ENCODE measurements at regions of chr2 and their contacts with region 1.

Region 1: DNA sequence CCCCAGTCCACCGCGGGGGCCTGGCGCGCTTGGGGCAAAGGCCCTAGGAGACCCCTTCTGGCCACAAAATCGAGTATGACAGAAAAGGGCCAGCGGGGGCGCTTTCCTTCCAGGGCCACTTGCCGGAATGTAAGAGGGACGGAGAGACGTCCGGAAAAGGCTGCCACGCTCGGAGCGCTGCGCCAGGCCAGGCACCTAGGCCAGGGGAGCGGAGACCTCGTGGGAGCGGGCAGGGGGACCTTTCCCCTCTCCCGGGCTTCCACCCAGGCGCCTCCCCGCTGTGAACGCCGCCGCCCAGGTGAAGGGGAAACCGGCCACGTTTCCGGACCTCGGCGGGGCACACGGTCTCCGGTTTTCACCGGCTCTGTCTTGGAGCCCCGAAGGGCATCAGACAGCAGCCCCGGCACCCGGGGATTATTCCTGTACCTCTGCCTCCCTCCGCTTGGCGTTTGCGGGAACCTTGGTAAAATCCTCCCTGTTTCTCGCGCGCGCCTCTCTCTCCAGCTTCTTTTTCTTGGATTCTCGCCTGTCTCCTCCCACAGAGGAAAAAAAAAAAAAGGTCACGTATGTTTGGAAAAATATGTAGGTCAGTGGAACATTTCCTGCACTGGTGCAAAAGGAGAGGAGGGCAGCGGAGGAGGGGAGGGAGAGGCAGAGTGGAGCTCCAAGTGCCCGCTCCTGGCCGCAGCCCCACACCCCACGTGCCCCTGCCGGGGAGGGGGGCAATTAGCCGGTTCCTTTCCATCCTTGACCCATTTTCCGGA is 1.2 kb upstream of the NPAS2 start:
- DNase-seq: peak; percentile 55 to 76
- H3K4me3 ChIP-seq: peak overlapping the region; percentile 73
- H3K27ac ChIP-seq: peak overlapping the region; percentile 83
- H3K4me1 ChIP-seq: peaks cover 33% of the 10 kb centered on the region
- H3K27me3 ChIP-seq: no peaks in the 10 kb centered on the region
- CTCF ChIP-seq: peak; percentile 50; the same call in 1 of the 2 replicates

Region 2: DNA sequence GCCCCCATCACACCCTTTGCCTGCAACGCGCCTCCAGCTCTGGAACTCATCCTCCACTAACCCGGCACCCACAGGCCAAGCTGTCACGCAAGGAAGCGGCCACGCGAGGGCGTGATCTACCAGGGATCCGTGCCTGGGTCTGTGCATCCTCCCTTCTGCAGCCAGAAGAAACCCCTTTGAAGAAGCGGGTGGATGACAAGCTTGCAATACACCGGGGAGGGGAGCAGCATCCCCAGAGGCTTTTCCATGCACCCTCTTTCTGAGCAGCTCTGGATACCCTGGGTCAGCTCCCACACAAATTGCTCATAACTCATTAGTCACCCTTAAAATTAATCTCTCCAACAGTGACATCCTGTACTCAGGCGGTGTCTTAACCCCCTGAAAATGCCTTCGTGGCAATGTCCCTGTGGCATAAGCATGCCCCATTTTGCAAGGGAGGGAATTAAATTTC is 208.4 kb before region 1 on chr2:
- CTCF ChIA-PET with region 1: no interaction called
- POLR2A ChIA-PET with region 1: no interaction called
- intact Hi-C with region 1: loop called (anchors 1 kb)
- DNase-seq: peak; percentile 35 to 80
- H3K4me3 ChIP-seq: no peak overlapping the region
- H3K27ac ChIP-seq: no peak overlapping the region
- H3K4me1 ChIP-seq: no peaks in the 10 kb centered on the region
- H3K27me3 ChIP-seq: no peaks in the 10 kb centered on the region
- CTCF ChIP-seq: peak; percentile 79

Region 3: DNA sequence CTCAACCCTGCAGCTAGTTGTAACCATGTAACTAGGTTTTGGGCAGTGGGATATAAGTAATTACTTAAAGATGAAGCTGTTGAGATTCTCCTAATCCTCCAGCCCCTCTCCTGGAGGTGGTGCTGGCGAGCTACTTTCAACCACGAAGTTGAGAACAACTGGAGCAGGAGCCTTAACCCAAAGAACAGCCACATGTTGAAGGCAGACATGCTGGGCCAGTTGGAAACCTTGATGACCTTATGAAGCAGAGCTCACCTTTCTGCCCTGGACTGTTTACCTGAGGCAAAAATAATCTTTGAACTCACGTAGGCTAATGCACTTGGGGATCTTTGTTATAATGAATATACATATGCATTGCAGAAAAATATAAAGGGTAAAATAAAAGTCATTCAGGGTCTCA is 88.4 kb before region 1 on chr2:
- CTCF ChIA-PET with region 1: no interaction called
- POLR2A ChIA-PET with region 1: no interaction called
- intact Hi-C with region 1: loop called (anchors 2 kb)
- DNase-seq: peak; percentile 61 to 72
- H3K4me3 ChIP-seq: no peak overlapping the region
- H3K27ac ChIP-seq: no peak overlapping the region
- H3K4me1 ChIP-seq: peaks cover 29% of the 10 kb centered on the region
- H3K27me3 ChIP-seq: no peaks in the 10 kb centered on the region
- CTCF ChIP-seq: peak; percentile 86

Region 4: GRCh38 chr2:100845141-100845991 is 26.6 kb after region 1 on chr2:
- CTCF ChIA-PET with region 1: no interaction called
- POLR2A ChIA-PET with region 1: no interaction called
- intact Hi-C with region 1: no loop called
- DNase-seq: no peak
- H3K4me3 ChIP-seq: no peak overlapping the region
- H3K27ac ChIP-seq: 0 out of 2 replicates have a peak overlapping the region, but pooled peaks have one; percentile 10
- H3K4me1 ChIP-seq: no peaks in the 10 kb centered on the region
- H3K27me3 ChIP-seq: no peaks in the 10 kb centered on the region
- CTCF ChIP-seq: no peak

Region 5: DNA sequence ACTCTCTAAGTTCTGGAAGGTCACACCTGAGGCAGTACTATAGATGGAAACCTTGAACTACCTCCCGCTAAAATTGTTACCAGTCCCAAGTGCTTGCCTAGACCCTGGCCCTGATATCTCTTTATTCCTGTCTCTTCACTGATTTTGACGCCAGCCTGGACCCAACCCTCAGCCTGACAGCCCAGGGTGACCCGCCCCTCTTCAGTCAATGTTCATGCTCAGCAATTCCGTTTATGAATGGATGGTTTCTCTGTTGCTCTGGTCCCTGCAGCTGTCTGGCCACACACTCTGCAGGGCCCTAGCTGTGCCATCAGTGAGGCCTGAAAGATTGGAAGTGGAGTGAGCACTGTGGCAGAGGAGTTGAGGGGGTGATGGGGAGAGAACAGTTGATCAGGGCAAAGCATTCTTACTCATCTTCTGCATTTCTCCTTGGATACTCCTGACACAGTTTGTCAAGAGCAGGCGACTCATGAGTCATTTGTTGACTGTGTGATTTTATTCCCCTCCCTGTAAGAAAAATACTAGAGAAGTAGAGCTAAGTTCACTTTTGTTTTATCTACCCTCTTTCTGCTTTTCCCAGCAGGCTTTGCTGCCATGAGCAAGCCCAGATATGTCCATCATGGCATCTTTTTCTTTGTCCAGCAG is 47.1 kb after region 1 on chr2:
- CTCF ChIA-PET with region 1: no interaction called
- POLR2A ChIA-PET with region 1: no interaction called
- intact Hi-C with region 1: loop called (anchors 5 kb)
- DNase-seq: peak in 1 of 2 experiments; percentile 81
- H3K4me3 ChIP-seq: peak overlapping the region; percentile 31; the same call in 1 of the 2 replicates
- H3K27ac ChIP-seq: peak overlapping the region; percentile 85
- H3K4me1 ChIP-seq: peaks cover 61% of the 10 kb centered on the region
- H3K27me3 ChIP-seq: no peaks in the 10 kb centered on the region
- CTCF ChIP-seq: no peak

Region 6: GRCh38 chr2:100948942-100949811 is 130.4 kb after region 1 on chr2:
- CTCF ChIA-PET with region 1: interaction called, 22 read pairs
- POLR2A ChIA-PET with region 1: no interaction called
- intact Hi-C with region 1: no loop called
- DNase-seq: no peak
- H3K4me3 ChIP-seq: no peak overlapping the region
- H3K27ac ChIP-seq: no peak overlapping the region
- H3K4me1 ChIP-seq: no peaks in the 10 kb centered on the region
- H3K27me3 ChIP-seq: no peaks in the 10 kb centered on the region
- CTCF ChIP-seq: no peak

Region 7: DNA sequence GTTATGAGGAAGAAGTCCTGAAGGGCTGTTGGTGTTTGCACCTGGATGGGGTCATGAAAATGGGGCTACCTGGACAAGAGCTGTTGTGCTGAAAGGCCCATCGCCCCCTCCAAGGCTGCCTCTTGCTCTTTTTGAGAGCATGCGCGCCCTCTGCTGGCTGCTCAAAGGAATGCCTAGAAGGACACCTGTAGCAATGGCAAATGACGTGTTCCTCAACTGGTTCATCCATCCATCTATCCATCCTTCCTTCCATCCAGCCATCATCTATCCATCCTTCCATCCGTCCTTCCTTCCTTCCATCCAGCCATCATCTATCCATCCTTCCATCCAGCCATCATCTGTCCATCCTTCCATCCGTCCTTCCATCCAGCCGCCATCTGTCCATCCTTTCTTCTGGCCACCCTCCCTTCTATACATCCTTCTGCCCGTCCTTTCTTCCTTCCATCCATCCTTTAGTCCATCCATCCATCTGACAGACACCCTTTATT is 166.1 kb after region 1 on chr2:
- CTCF ChIA-PET with region 1: interaction called, 5 read pairs
- POLR2A ChIA-PET with region 1: no interaction called
- intact Hi-C with region 1: loop called (anchors 5 kb)
- DNase-seq: peak; percentile 50 to 63
- H3K4me3 ChIP-seq: no peak overlapping the region
- H3K27ac ChIP-seq: no peak overlapping the region
- H3K4me1 ChIP-seq: no peaks in the 10 kb centered on the region
- H3K27me3 ChIP-seq: no peaks in the 10 kb centered on the region
- CTCF ChIP-seq: peak; percentile 94